AG04450 (cell line): ENCODE measurements at regions of chr16 and their contacts with region 1.

Region 1: GRCh38 chr16:19502395-19503131 is 19.3 kb downstream of the GDE1 start:
- DNase-seq: no peak
- H3K4me3 ChIP-seq: no peak overlapping the region
- H3K27ac ChIP-seq: no peak overlapping the region
- H3K27me3 ChIP-seq: no peaks in the 10 kb centered on the region
- CTCF ChIP-seq: peak; percentile 86

Region 2: GRCh38 chr16:19138601-19139000 is 364.0 kb before region 1 on chr16:
- CTCF ChIA-PET with region 1: interaction called, 10 read pairs
- POLR2A ChIA-PET with region 1: no interaction called
- DNase-seq: peak; percentile 73
- H3K4me3 ChIP-seq: no peak overlapping the region
- H3K27ac ChIP-seq: peak overlapping the region; percentile 59
- H3K27me3 ChIP-seq: peaks cover 2% of the 10 kb centered on the region
- CTCF ChIP-seq: no peak

Region 3: DNA sequence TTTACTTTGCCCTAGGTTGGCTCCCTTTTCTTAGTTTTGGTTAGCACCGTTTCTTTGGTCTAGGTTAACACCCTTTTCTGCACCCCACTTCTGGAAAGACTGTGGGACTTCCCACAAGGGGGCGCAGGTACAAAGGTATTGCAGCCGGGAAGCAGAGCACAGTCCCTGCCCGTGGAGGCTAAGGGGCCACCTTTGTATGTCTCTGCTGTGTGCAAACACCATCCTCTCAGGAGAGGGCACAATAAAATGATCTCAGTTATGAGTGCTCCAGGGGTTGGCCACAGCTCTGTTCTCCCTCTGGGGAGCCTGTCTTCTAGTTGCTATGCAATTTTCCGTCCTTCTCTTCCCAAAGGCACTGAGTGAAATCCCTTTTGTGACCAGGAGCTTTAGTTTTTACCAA is 113.3 kb before region 1 on chr16:
- CTCF ChIA-PET with region 1: interaction called, 23 read pairs
- POLR2A ChIA-PET with region 1: no interaction called
- DNase-seq: no peak
- H3K4me3 ChIP-seq: no peak overlapping the region
- H3K27ac ChIP-seq: no peak overlapping the region
- H3K27me3 ChIP-seq: no peaks in the 10 kb centered on the region
- CTCF ChIP-seq: peak; percentile 40

Region 4: DNA sequence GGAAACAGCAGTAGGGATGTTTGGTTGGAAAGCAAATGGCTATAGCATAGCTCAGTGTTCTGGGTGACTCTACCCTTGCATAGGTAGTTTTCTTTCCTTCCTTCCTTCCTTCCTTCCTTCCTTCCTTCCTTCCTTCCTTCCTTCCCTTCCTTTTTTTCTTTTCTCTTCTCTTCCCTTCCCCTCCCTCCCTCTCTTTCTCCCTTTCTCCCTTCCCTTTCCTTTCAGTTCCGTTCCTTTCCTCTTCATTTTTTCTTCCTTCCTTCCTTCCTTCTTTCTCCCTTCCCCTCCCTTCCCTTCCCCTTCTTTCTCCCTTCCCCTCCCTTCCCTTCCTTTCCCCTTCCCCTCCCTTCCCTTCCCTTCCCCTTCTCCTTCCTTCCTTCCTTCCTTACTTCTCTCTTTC is 11.9 kb before region 1 on chr16:
- CTCF ChIA-PET with region 1: interaction called, 13 read pairs
- POLR2A ChIA-PET with region 1: no interaction called
- DNase-seq: no peak
- H3K4me3 ChIP-seq: no peak overlapping the region
- H3K27ac ChIP-seq: no peak overlapping the region
- H3K27me3 ChIP-seq: no peaks in the 10 kb centered on the region
- CTCF ChIP-seq: no peak

Region 5: DNA sequence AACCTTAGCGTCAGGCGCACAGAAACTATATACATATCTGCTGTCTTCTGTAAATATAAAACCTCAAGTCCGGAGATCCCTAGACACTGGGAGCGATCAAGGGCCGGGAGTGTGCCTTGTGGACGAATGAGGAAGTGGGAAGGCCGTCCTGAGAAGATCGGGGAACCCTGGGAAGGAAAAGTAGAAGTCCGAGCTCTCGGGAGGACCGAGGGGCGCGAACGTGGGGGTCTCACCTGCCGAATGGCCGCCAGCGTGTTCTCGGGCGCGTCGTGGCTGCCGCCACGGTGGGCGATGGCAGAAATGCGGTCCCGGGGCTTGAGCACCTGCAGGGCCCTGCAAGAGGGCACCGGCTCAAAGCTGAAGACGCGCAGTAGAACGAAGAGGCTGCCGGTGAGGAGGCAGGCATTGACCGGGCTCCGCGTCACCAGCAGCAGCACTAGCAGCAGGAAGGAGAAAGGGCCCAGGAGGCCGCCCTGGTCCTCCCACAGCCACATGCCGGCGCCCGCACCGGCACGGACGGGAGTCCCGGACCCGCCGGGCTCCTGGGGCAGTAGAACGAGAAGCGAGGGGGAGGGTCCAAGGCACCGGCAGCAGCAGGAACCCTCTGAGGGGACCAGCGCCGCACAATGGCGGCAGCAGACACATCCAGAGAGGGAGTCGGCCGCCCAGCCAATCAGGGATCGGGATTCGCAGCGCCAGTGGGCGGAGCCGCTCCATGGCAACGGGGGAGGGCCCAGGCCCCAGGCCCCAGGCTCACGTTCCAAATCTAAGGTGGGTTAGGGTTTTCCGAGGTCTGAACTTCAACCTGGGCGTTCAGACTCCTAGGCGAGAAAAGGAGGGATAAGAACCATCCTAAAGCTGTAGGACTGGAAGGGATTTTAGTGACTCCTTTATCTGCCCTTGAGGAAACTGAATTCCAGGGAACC is 19.2 kb after region 1 on chr16 and contains the start of gene GDE1:
- CTCF ChIA-PET with region 1: interaction called, 70 read pairs
- POLR2A ChIA-PET with region 1: interaction called, 3 read pairs
- DNase-seq: peak; percentile 62
- H3K4me3 ChIP-seq: peak within 1 kb of the TSS; percentile 88
- H3K27ac ChIP-seq: peak within 1 kb of the TSS; percentile 84
- H3K27me3 ChIP-seq: no peaks in the 10 kb centered on the region
- CTCF ChIP-seq: peak; percentile 49
- polyA plus RNA-seq, gene GDE1: 89.7 and 100 TPM in 2 replicates

Region 6: GRCh38 chr16:19542138-19542821 is 39.7 kb after region 1 on chr16:
- CTCF ChIA-PET with region 1: interaction called, 10 read pairs
- POLR2A ChIA-PET with region 1: no interaction called
- DNase-seq: no peak
- H3K4me3 ChIP-seq: no peak overlapping the region
- H3K27ac ChIP-seq: no peak overlapping the region
- H3K27me3 ChIP-seq: no peaks in the 10 kb centered on the region
- CTCF ChIP-seq: no peak